Astrocyte of the cerebellum (primary cell): ENCODE measurements at regions of chr2 and their contacts with region 1.

Region 1: GRCh38 chr2:172350839-172351479 is 76.4 kb upstream of the ITGA6 start:
- DNase-seq: no peak
- H3K4me3 ChIP-seq: no peak overlapping the region
- CTCF ChIP-seq: no peak

Region 2: DNA sequence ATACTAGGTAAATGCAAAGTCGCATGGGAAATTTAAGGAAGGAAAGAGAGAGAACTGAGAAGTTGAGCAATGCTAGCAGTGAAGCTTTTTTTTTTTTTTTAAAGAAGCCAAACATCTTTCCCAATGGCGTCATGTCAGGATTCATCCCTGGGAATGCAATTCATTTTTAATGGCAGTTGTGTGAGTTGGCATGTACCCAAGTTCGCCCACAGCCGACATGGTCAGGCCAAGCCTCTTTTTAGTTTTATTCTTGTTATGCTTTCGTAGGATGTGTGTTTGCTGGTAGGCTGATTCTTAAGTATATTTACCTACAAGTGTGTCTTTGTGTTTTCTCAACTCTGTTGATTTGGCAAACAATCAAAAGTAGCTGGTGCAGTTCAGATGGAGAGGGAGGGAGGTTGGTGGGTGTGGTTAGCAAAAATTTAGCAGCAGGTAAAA is 51.2 kb before region 1 on chr2:
- in situ Hi-C with region 1: loop called (anchors 5 kb)
- DNase-seq: no peak
- H3K4me3 ChIP-seq: no peak overlapping the region
- CTCF ChIP-seq: no peak

Region 3: GRCh38 chr2:172409042-172409441 is 58.1 kb after region 1 on chr2:
- in situ Hi-C with region 1: no loop called
- DNase-seq: no peak
- H3K4me3 ChIP-seq: no peak overlapping the region
- CTCF ChIP-seq: no peak

Region 4: DNA sequence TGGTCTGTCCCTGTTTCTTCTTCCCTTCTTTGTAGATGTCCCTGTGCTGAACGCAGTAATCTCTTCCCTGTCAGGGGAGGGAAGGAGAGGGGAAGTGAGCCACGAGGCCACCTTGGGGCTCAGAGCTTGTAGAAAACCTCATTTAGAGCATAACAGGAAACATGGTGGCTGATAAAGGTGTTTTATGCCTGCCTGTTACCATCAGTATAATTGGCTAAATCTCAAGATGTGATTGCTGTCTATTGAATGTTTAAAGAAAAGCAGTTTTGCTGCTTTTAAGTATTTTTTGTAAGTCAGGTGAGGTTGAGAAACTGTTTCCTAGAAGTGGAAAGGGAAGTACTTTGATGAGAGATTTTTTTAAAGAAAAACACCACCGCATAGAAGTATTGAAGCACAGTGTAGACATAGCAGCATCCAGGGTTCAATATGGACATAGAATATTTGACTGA is 145.2 kb after region 1 on chr2:
- in situ Hi-C with region 1: no loop called
- DNase-seq: no peak
- H3K4me3 ChIP-seq: no peak overlapping the region
- CTCF ChIP-seq: no peak